ENCODE measurements at regions of chr14 and their contacts with region 1.

Region 1: GRCh38 chr14:20855652-20856291 is 35.4 kb upstream of the RNASE3 start:
- DNase-seq: peak; percentile 21
- ATAC-seq: peak; percentile 95
- H3K4me3 ChIP-seq: no peak overlapping the region
- H3K27ac ChIP-seq: no peak overlapping the region
- H3K4me1 ChIP-seq: no peaks in the 10 kb centered on the region
- H3K27me3 ChIP-seq: no peaks in the 10 kb centered on the region
- CTCF ChIP-seq: peak; percentile 74 to 85 (median 81)
- EP300 ChIP-seq: no peak
- POLR2A ChIP-seq: no peak
- RAD21 ChIP-seq: peak; percentile 95

Region 2: DNA sequence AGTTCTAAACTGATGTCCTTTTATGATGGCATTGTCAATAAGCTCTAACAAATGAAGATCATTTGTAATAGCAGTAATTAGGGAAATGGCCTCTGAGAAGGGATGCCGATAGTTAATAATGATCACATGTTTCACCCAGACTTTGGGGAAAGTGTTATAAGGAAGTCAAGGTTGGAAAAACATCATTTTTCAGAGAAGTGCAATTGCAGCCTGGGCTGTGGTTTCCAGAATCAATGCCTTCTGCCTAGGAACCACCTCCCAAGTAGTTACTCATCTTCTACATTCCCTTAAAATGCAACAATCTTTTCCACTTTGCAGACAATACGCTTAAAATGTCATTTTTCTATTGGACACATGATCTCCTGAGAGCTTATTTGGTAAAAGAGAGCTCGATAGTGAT is 109.2 kb before region 1 on chr14:
- CTCF ChIA-PET with region 1: interaction called, 12 read pairs
- POLR2A ChIA-PET with region 1: no interaction called
- RAD21 ChIA-PET with region 1: no interaction called
- SMC1A ChIA-PET with region 1: interaction called, 3 read pairs
- in situ Hi-C with region 1: no loop called
- intact Hi-C with region 1: no loop called
- DNase-seq: no peak
- ATAC-seq: no peak
- H3K4me3 ChIP-seq: no peak overlapping the region
- H3K27ac ChIP-seq: no peak overlapping the region
- H3K4me1 ChIP-seq: no peaks in the 10 kb centered on the region
- H3K27me3 ChIP-seq: no peaks in the 10 kb centered on the region
- CTCF ChIP-seq: no peak
- EP300 ChIP-seq: no peak
- POLR2A ChIP-seq: no peak
- RAD21 ChIP-seq: no peak

Region 3: GRCh38 chr14:20757965-20758364 is 97.8 kb before region 1 on chr14:
- CTCF ChIA-PET with region 1: interaction called, 21 read pairs
- POLR2A ChIA-PET with region 1: no interaction called
- RAD21 ChIA-PET with region 1: interaction called, 10 read pairs
- SMC1A ChIA-PET with region 1: interaction called, 15 read pairs
- in situ Hi-C with region 1: no loop called
- intact Hi-C with region 1: loop called (anchors 1 kb)
- DNase-seq: no peak
- ATAC-seq: peak; percentile 74
- H3K4me3 ChIP-seq: no peak overlapping the region
- H3K27ac ChIP-seq: no peak overlapping the region
- H3K4me1 ChIP-seq: no peaks in the 10 kb centered on the region
- H3K27me3 ChIP-seq: no peaks in the 10 kb centered on the region
- CTCF ChIP-seq: peak; percentile 43 to 62 (median 54); a peak in 5 of 6 replicates
- EP300 ChIP-seq: no peak
- POLR2A ChIP-seq: no peak
- RAD21 ChIP-seq: peak; percentile 75

Region 4: DNA sequence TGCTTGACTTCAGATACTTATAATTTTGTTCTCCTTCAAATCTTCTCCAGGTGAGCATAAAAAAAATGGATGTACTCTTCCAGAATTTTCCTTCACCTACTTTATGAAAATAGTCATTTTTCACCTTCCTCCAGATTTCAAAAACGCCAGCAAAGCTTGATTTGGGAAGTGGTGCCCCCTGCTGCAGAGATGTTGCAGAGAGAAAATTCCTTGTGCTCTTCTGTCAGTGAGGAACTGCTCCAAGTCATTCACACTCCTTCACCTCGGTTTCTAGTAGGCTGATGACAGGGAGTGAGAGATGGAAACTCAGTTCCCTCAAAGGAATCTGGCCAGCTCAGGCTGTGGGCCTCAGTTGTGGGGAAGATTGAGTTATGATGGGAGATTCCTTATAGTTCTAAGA is 11.2 kb after region 1 on chr14:
- CTCF ChIA-PET with region 1: interaction called, 18 read pairs
- POLR2A ChIA-PET with region 1: no interaction called
- RAD21 ChIA-PET with region 1: interaction called, 5 read pairs
- SMC1A ChIA-PET with region 1: interaction called, 4 read pairs
- in situ Hi-C with region 1: no loop called
- intact Hi-C with region 1: no loop called
- DNase-seq: no peak
- ATAC-seq: no peak
- H3K4me3 ChIP-seq: no peak overlapping the region
- H3K27ac ChIP-seq: no peak overlapping the region
- H3K4me1 ChIP-seq: no peaks in the 10 kb centered on the region
- H3K27me3 ChIP-seq: no peaks in the 10 kb centered on the region
- CTCF ChIP-seq: peak; percentile 30 to 46 (median 31); a peak in 5 of 6 replicates
- EP300 ChIP-seq: no peak
- POLR2A ChIP-seq: no peak
- RAD21 ChIP-seq: peak; percentile 34; the same call in 1 of the 2 replicates

Region 5: GRCh38 chr14:20873370-20874177 is 17.8 kb after region 1 on chr14:
- CTCF ChIA-PET with region 1: interaction called, 18 read pairs
- POLR2A ChIA-PET with region 1: no interaction called
- RAD21 ChIA-PET with region 1: interaction called, 5 read pairs
- SMC1A ChIA-PET with region 1: interaction called, 4 read pairs
- in situ Hi-C with region 1: no loop called
- intact Hi-C with region 1: no loop called
- DNase-seq: no peak
- ATAC-seq: peak; percentile 98
- H3K4me3 ChIP-seq: no peak overlapping the region
- H3K27ac ChIP-seq: no peak overlapping the region
- H3K4me1 ChIP-seq: no peaks in the 10 kb centered on the region; the same call in 1 of the 2 replicates
- H3K27me3 ChIP-seq: no peaks in the 10 kb centered on the region
- CTCF ChIP-seq: peak; percentile 75 to 88 (median 85)
- EP300 ChIP-seq: no peak
- POLR2A ChIP-seq: no peak
- RAD21 ChIP-seq: peak; percentile 69

Region 6: GRCh38 chr14:20970983-20971704 is 115.4 kb after region 1 on chr14:
- CTCF ChIA-PET with region 1: interaction called, 61 read pairs
- POLR2A ChIA-PET with region 1: no interaction called
- RAD21 ChIA-PET with region 1: interaction called, 10 read pairs
- SMC1A ChIA-PET with region 1: interaction called, 20 read pairs
- in situ Hi-C with region 1: loop called (anchors 5 kb)
- intact Hi-C with region 1: loop called (anchors 2 kb)
- DNase-seq: peak; percentile 9
- ATAC-seq: peak; percentile 98
- H3K4me3 ChIP-seq: peak overlapping the region; percentile 60
- H3K27ac ChIP-seq: no peak overlapping the region
- H3K4me1 ChIP-seq: no peaks in the 10 kb centered on the region
- H3K27me3 ChIP-seq: no peaks in the 10 kb centered on the region; a peak in 1 of 4 replicates
- CTCF ChIP-seq: peak; percentile 87 to 98 (median 90)
- EP300 ChIP-seq: no peak
- POLR2A ChIP-seq: no peak
- RAD21 ChIP-seq: peak; percentile 49

Region 7: DNA sequence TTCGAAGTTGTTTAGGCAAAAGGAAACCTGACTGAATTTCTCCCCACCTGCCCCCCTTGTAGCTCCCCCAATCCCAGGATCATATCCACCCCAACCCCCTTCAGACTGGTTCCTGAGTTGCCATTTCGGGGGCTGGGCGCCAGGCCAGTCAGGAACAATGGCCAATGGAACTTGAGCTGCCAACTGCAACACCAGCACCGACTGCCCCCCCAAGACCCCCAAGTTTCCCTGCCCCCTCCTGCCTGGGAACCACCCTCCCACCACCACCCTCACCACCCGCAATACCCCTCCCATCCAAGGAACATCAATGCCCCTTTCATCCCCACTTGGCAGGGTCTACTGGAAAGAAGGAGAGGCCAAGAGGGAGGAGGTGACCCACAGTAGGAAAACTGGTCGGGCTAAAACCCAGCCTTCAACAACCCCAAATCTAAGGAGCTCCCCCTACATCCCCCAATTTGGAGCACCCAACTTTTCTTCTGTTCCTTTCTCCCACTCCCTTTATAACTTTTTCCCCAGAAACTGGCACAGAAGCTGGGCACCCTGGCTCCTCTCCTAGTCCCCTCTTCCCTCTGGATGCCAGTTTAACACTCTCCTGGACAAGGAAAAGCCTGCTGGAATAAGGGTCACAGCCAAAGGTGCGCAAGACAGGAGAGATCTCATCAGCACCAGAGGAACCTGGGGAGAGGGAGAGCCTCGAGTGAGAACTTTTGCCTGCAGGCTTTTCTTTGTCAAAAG is 170.6 kb after region 1 on chr14:
- CTCF ChIA-PET with region 1: no interaction called
- POLR2A ChIA-PET with region 1: no interaction called
- RAD21 ChIA-PET with region 1: no interaction called
- SMC1A ChIA-PET with region 1: no interaction called
- in situ Hi-C with region 1: no loop called
- intact Hi-C with region 1: no loop called
- DNase-seq: no peak
- ATAC-seq: no peak
- H3K4me3 ChIP-seq: no peak overlapping the region
- H3K27ac ChIP-seq: no peak overlapping the region
- H3K4me1 ChIP-seq: peaks cover 4% of the 10 kb centered on the region; the same call in 1 of the 2 replicates
- H3K27me3 ChIP-seq: peaks cover 15 to 23% of the 10 kb centered on the region in 2 experiments
- CTCF ChIP-seq: no peak
- EP300 ChIP-seq: no peak
- POLR2A ChIP-seq: no peak
- RAD21 ChIP-seq: no peak